MCF 10A (cell line): ENCODE measurements at regions of chr5 and their contacts with region 1.

Region 1: GRCh38 chr5:138065102-138065501 is 18.7 kb upstream of the WNT8A start:
- DNase-seq: no peak
- H3K4me3 Mint-ChIP-seq: no peak overlapping the region
- H3K27ac Mint-ChIP-seq: no peak overlapping the region
- H3K4me1 Mint-ChIP-seq: peaks cover 7% of the 10 kb centered on the region
- H3K27me3 Mint-ChIP-seq: no peaks in the 10 kb centered on the region
- CTCF ChIP-seq: peak; percentile 18

Region 2: GRCh38 chr5:137994556-137994955 is 70.5 kb before region 1 on chr5:
- CTCF ChIA-PET with region 1: no interaction called
- POLR2A ChIA-PET with region 1: no interaction called
- intact Hi-C with region 1: no loop called
- DNase-seq: no peak
- H3K4me3 Mint-ChIP-seq: no peak overlapping the region
- H3K27ac Mint-ChIP-seq: no peak overlapping the region
- H3K4me1 Mint-ChIP-seq: peaks cover 24% of the 10 kb centered on the region
- H3K27me3 Mint-ChIP-seq: no peaks in the 10 kb centered on the region
- CTCF ChIP-seq: no peak

Region 3: GRCh38 chr5:138054847-138055558 is 10.1 kb before region 1 on chr5:
- CTCF ChIA-PET with region 1: interaction called, 13 read pairs
- POLR2A ChIA-PET with region 1: interaction called, 4 read pairs
- intact Hi-C with region 1: no loop called
- DNase-seq: no peak
- H3K4me3 Mint-ChIP-seq: no peak overlapping the region
- H3K27ac Mint-ChIP-seq: no peak overlapping the region
- H3K4me1 Mint-ChIP-seq: no peaks in the 10 kb centered on the region
- H3K27me3 Mint-ChIP-seq: peaks cover 18% of the 10 kb centered on the region
- CTCF ChIP-seq: no peak

Region 4: GRCh38 chr5:138138949-138139780 is 74.1 kb after region 1 on chr5 and contains the start of gene NME5:
- CTCF ChIA-PET with region 1: interaction called, 17 read pairs
- POLR2A ChIA-PET with region 1: interaction called, 5 read pairs
- intact Hi-C with region 1: no loop called
- DNase-seq: no peak
- H3K4me3 Mint-ChIP-seq: peak within 1 kb of the TSS; percentile 21
- H3K27ac Mint-ChIP-seq: no peak within 1 kb of the TSS
- H3K4me1 Mint-ChIP-seq: no peaks in the 10 kb centered on the region
- H3K27me3 Mint-ChIP-seq: no peaks in the 10 kb centered on the region
- CTCF ChIP-seq: no peak
- total RNA-seq, gene NME5: 1.0 TPM in 1 of 2 replicates, not detected in the other

Region 5: GRCh38 chr5:138391859-138392386 is 326.8 kb after region 1 on chr5:
- CTCF ChIA-PET with region 1: no interaction called
- POLR2A ChIA-PET with region 1: no interaction called
- intact Hi-C with region 1: no loop called
- DNase-seq: no peak
- H3K4me3 Mint-ChIP-seq: no peak overlapping the region
- H3K27ac Mint-ChIP-seq: no peak overlapping the region
- H3K4me1 Mint-ChIP-seq: peaks cover 11% of the 10 kb centered on the region
- H3K27me3 Mint-ChIP-seq: no peaks in the 10 kb centered on the region
- CTCF ChIP-seq: no peak

Region 6: DNA sequence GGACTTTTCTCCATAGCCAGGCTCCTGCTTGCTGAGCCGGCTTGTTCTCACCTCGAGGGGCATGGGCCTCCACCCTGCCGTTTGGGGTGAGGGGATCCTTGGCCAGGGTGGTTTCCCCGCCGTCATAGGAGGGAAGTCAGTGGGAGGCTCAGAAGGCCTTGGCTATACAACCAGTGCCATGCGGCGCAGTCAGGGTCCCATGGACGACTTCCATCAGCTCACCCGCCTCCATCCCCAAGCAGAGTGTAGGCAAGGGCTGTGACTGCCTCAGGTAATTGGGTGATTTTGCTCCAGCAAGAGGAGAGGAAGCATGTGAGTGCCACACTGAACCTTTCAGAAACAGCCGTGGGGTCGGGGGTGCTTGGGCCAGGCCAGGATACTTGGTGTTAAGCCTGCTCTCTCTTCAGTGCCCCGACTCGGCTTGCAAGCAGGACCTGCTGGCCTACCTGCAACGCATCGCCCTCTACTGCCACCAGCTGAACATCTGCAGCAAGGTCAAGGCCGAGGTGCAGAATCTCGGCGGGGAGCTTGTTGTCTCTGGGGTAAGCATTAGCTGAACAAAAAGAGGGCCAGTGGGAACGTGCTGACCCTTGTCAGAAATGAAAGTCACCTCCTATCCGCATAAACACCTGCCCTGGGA is 867.2 kb after region 1 on chr5:
- CTCF ChIA-PET with region 1: no interaction called
- POLR2A ChIA-PET with region 1: no interaction called
- intact Hi-C with region 1: no loop called
- DNase-seq: peak; percentile 30
- H3K4me3 Mint-ChIP-seq: no peak overlapping the region
- H3K27ac Mint-ChIP-seq: peak overlapping the region; percentile 20
- H3K4me1 Mint-ChIP-seq: no peaks in the 10 kb centered on the region
- H3K27me3 Mint-ChIP-seq: no peaks in the 10 kb centered on the region
- CTCF ChIP-seq: no peak